Activated CD4-positive, alpha-beta memory T cell treated with anti-CD3 and anti-CD28 coated beads, Interleukin-2, amount 10 ng/mL, durations not matched to agents 7 days and 5 days (primary cell): ENCODE measurements at regions of chr1 and their contacts with region 1.

Region 1: DNA sequence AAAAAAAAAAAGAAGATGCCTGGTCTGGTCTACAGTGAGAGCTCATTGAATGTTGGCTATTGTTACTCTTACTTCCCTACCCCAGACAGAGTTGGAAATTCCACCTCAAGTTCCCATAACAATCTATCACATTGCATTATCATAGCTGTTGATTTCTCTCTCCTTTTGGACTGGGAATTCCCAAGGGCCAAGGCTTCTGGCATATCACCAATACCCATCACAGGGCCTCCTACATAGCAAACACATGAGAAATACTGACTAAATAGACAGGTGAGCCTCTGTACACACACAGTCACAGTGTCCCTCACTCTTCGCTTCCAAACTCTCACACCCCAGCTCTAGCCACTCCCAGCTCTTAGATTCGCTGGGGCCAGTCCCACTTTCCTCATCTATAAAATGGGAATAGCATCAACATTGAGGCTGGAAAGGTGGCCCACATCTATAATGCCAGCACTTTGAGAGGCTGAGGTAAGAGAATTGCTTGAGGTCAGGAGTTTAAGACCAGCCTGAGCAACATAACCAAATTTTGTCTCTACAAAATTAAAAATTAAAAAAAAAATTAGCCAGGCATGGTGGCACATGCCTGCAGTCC is 6.4 kb downstream of the PTAFR start:
- DNase-seq: no peak
- H3K4me3 Mint-ChIP-seq: no peak overlapping the region
- H3K27ac Mint-ChIP-seq: no peak overlapping the region
- H3K4me1 Mint-ChIP-seq: peaks cover 50% of the 10 kb centered on the region
- H3K27me3 Mint-ChIP-seq: peaks cover 60% of the 10 kb centered on the region

Region 2: GRCh38 chr1:28199328-28200233 is 29.5 kb after region 1 on chr1:
- CTCF ChIA-PET with region 1: interaction called, 8 read pairs
- POLR2A ChIA-PET with region 1: interaction called, 18 read pairs
- DNase-seq: peak; percentile 92
- H3K4me3 Mint-ChIP-seq: peak overlapping the region; percentile 39
- H3K27ac Mint-ChIP-seq: peak overlapping the region; percentile 94
- H3K4me1 Mint-ChIP-seq: peaks cover 54% of the 10 kb centered on the region
- H3K27me3 Mint-ChIP-seq: no peaks in the 10 kb centered on the region